GM12878 (cell line): ENCODE measurements at regions of chr1 and their contacts with region 1.

Region 1: DNA sequence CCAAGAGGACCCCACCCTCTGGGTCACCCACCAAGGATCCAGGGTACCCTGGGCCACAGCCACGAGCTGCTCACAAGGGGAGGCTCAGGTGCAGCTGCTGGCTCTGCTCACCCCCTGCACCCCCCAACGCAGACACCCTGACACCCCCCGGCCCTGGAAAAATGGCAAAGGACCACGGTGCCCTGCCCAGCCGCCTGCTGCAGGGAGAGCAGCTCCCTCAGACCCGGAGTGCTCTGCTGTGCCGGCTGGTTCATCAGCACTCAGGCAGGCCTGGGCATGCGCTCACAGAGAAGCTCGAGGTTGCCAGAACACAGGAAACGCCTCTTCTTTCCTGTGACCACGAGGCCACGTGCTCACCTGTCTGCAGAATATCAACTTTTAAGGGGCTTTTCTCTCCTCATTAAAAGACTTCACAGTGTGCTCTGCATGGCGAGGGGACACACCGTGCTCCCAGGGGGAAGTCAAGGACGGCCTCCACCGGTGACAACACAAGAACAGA is 4.3 kb upstream of the C1QTNF12 start:
- DNase-seq: peak; percentile 53
- ATAC-seq: peak; percentile 97
- H3K4me3 ChIP-seq: no peak overlapping the region
- H3K27ac ChIP-seq: peak overlapping the region; percentile 82
- H3K4me1 ChIP-seq: peaks cover 12% of the 10 kb centered on the region
- H3K27me3 ChIP-seq: peaks cover 1 to 5% of the 10 kb centered on the region in 2 experiments; a peak in 3 of 4 replicates
- CTCF ChIP-seq: 0 out of 6 replicates have a peak, but pooled peaks of 1 of the 3 experiments have one; percentile 5
- EP300 ChIP-seq: peak in 1 of 2 experiments; percentile 37; a peak in 1 of 4 replicates
- POLR2A ChIP-seq: peak; percentile 80
- RAD21 ChIP-seq: no peak

Region 2: GRCh38 chr1:1115786-1116700 is 134.8 kb before region 1 on chr1 and contains the start of gene C1orf159:
- CTCF ChIA-PET with region 1: interaction called, 100 read pairs
- POLR2A ChIA-PET with region 1: interaction called, 6 read pairs
- RAD21 ChIA-PET with region 1: interaction called, 92 read pairs
- SMC1A ChIA-PET with region 1: interaction called, 36 read pairs
- in situ Hi-C with region 1: loop called (anchors 5 kb)
- intact Hi-C with region 1: no loop called
- DNase-seq: peak; percentile 74
- ATAC-seq: peak; percentile 98
- H3K4me3 ChIP-seq: peak within 1 kb of the TSS; percentile 91
- H3K27ac ChIP-seq: no peak within 1 kb of the TSS
- H3K4me1 ChIP-seq: no peaks in the 10 kb centered on the region; the same call in 1 of the 2 replicates
- H3K27me3 ChIP-seq: peaks cover 0 to 6% of the 10 kb centered on the region in 2 experiments; a peak in 3 of 4 replicates
- CTCF ChIP-seq: no peak
- EP300 ChIP-seq: no peak
- POLR2A ChIP-seq: peak; percentile 62
- RAD21 ChIP-seq: no peak
- polyA plus RNA-seq, gene C1orf159: 0.11 to 0.44 TPM

Region 3: GRCh38 chr1:1212780-1213344 is 38.0 kb before region 1 on chr1:
- CTCF ChIA-PET with region 1: no interaction called
- POLR2A ChIA-PET with region 1: no interaction called
- RAD21 ChIA-PET with region 1: interaction called, 10 read pairs
- SMC1A ChIA-PET with region 1: no interaction called
- in situ Hi-C with region 1: no loop called
- intact Hi-C with region 1: no loop called
- DNase-seq: no peak
- ATAC-seq: peak; percentile 70
- H3K4me3 ChIP-seq: peak overlapping the region; percentile 27; the same call in 1 of the 2 replicates
- H3K27ac ChIP-seq: peak overlapping the region; percentile 25; the same call in 1 of the 2 replicates
- H3K4me1 ChIP-seq: peaks cover 38% of the 10 kb centered on the region
- H3K27me3 ChIP-seq: no peaks in the 10 kb centered on the region
- CTCF ChIP-seq: no peak
- EP300 ChIP-seq: no peak; a peak in 1 of 4 replicates
- POLR2A ChIP-seq: no peak
- RAD21 ChIP-seq: no peak

Region 4: GRCh38 chr1:1231400-1232223 is 19.2 kb before region 1 on chr1 and contains the start of gene SDF4:
- CTCF ChIA-PET with region 1: interaction called, 10 read pairs
- POLR2A ChIA-PET with region 1: no interaction called
- RAD21 ChIA-PET with region 1: interaction called, 5 read pairs
- SMC1A ChIA-PET with region 1: interaction called, 6 read pairs
- in situ Hi-C with region 1: no loop called
- intact Hi-C with region 1: no loop called
- DNase-seq: peak; percentile 72
- ATAC-seq: peak; percentile 98
- H3K4me3 ChIP-seq: peak within 1 kb of the TSS; percentile 91
- H3K27ac ChIP-seq: peak within 1 kb of the TSS; percentile 93
- H3K4me1 ChIP-seq: peaks cover 4% of the 10 kb centered on the region
- H3K27me3 ChIP-seq: no peaks in the 10 kb centered on the region
- CTCF ChIP-seq: no peak
- EP300 ChIP-seq: no peak
- POLR2A ChIP-seq: peak; percentile 96
- RAD21 ChIP-seq: no peak
- polyA plus RNA-seq, gene SDF4: 0.44 to 2.0 TPM

Region 5: DNA sequence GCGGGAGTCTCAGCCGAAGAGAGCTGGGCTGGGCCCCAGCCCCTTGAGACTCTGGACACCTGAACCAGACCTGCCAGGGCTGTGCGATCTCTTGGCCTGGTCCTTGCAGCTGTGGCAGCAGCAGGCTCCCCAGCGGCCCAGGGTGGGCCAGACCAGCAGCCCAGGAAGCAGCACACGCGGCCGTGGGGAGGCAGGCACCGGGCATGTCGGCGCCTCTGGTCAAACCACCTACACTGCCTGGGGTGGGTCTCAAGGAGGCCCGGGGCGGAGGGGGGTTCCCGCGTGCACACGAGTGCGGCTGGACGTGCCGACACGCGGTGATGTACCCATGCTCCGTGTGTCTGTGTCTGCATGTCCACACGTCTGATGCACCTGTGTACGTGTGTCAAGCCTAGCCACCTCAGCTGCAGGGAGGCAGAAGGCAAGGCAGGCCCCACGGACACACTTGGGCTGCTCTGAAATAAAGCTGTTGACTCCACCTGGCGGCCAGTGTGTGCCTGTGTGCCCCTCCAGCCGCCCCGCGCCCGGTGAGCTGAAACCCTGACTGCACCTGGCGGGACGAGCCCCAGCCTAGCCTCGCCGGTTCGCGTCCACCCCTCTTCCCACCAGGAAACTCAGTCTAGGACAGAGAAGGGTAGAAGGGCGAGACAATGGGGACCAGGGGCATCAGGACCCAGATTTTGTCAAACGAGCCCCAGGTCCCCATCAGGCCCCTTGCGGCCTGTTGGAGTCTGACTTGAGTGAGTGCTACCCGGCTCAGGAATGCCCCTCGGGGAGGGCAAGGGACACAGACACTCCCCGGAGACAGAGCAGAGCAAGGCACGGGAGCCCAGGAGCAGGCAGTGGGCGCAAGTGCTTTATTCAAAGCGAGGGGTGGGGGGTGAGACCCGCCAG is 41.0 kb after region 1 on chr1:
- CTCF ChIA-PET with region 1: interaction called, 26 read pairs
- POLR2A ChIA-PET with region 1: interaction called, 4 read pairs
- RAD21 ChIA-PET with region 1: interaction called, 9 read pairs
- SMC1A ChIA-PET with region 1: interaction called, 4 read pairs
- in situ Hi-C with region 1: no loop called
- intact Hi-C with region 1: no loop called
- DNase-seq: no peak
- ATAC-seq: peak; percentile 96
- H3K4me3 ChIP-seq: no peak overlapping the region
- H3K27ac ChIP-seq: no peak overlapping the region
- H3K4me1 ChIP-seq: no peaks in the 10 kb centered on the region
- H3K27me3 ChIP-seq: no peaks in the 10 kb centered on the region
- CTCF ChIP-seq: peak; percentile 78 to 85 (median 79)
- EP300 ChIP-seq: no peak
- POLR2A ChIP-seq: peak; percentile 60
- RAD21 ChIP-seq: peak; percentile 62